ENCODE measurements at regions of chr7 and their contacts with region 1.

Region 1: GRCh38 chr7:2863461-2864066 is 19.5 kb upstream of the GNA12 start:
- DNase-seq: peak; percentile 97
- ATAC-seq: peak; percentile 95
- H3K4me3 ChIP-seq: no peak overlapping the region
- H3K27ac ChIP-seq: peak overlapping the region; percentile 97
- H3K4me1 ChIP-seq: peaks cover 13% of the 10 kb centered on the region
- H3K27me3 ChIP-seq: no peaks in the 10 kb centered on the region
- CTCF ChIP-seq: no peak
- POLR2A ChIP-seq: peak; percentile 87
- RAD21 ChIP-seq: peak; percentile 11; the same call in 1 of the 2 replicates

Region 2: DNA sequence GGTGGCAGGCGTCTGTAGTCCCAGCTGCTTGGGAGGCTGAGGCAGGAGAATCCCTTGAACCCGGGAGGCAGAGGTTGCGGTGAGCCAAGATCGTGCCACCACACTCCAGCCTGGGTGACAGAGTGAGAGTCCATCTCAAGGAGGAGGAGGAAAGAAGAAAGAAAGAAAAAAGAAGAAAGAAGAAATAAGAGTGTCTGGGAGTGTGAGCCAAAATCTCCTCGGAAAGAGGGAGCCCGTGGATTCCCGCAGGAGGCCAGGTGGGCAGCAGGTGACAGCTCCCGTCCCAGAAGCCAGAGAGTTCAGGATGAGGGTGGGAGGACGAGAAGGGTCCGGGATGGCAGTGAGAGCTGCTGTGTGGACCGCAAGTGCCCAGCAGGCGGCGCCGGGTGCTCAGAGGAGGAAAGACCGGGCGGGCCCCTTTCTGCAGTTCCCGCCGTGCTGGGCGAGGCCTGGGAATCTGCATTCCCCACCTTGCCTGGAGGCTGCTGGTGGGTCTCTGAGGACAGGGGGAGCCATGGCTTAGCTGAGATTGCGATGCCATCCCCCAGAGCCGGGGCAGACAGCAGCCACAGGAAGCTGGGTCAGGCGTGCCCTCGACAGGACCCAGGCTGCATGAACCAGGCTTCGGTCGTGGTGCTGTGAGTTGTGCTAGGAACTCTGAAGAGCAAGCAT is 192.7 kb before region 1 on chr7:
- CTCF ChIA-PET with region 1: no interaction called
- POLR2A ChIA-PET with region 1: no interaction called
- dilution Hi-C with region 1: no loop called
- in situ Hi-C with region 1: no loop called
- intact Hi-C with region 1: loop called (anchors 5 kb)
- DNase-seq: peak; percentile 51
- ATAC-seq: peak; percentile 84
- H3K4me3 ChIP-seq: no peak overlapping the region
- H3K27ac ChIP-seq: no peak overlapping the region
- H3K4me1 ChIP-seq: peaks cover 6% of the 10 kb centered on the region
- H3K27me3 ChIP-seq: no peaks in the 10 kb centered on the region
- CTCF ChIP-seq: peak; percentile 82
- POLR2A ChIP-seq: no peak; the same call in 1 of the 2 replicates
- RAD21 ChIP-seq: peak; percentile 84

Region 3: GRCh38 chr7:2956526-2957368 is 93.2 kb after region 1 on chr7:
- CTCF ChIA-PET with region 1: no interaction called
- POLR2A ChIA-PET with region 1: no interaction called
- dilution Hi-C with region 1: no loop called
- in situ Hi-C with region 1: no loop called
- intact Hi-C with region 1: no loop called
- DNase-seq: peak; percentile 67
- ATAC-seq: peak; percentile 83
- H3K4me3 ChIP-seq: no peak overlapping the region
- H3K27ac ChIP-seq: no peak overlapping the region; the same call in 1 of the 2 replicates
- H3K4me1 ChIP-seq: no peaks in the 10 kb centered on the region
- H3K27me3 ChIP-seq: no peaks in the 10 kb centered on the region; the same call in 1 of the 2 replicates
- CTCF ChIP-seq: no peak
- POLR2A ChIP-seq: no peak
- RAD21 ChIP-seq: no peak

Region 4: DNA sequence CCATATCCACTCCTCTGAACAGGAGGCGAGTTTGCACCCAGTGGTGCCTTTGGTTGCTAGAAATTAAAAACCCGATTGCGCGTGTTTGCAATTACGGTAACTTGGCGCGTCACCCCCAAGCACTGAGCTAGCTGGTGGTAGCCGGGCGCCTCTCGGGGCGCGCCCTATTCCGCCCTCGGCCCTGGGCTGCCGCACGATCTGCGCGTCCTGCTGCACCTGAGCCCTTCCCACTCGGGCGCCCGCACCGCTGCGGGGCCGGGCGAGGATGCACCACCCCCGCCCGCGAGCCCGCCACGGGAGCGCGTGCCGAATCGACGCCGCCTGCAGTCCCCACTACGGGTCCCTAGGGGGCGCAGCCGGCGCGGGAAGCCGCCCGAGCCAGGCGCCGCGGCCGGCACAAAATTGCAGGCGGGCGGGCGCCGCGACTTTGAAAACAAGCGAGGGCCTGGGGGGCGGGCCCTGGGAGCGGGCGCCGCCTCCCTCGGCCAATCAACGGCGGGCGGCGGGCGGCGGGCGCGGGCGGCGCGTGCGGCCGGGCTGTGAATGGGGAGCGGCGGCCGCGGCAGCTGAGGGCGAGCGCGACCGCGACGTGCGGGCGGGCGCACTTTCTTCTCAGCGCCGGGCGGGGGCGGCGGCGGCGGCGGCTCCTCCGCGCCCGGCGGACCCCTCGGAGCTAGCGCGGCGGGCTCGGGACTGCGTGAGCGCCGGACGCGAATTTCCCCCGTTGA is 437.3 kb after region 1 on chr7 and contains the start of gene SDK1:
- CTCF ChIA-PET with region 1: no interaction called
- POLR2A ChIA-PET with region 1: no interaction called
- dilution Hi-C with region 1: no loop called
- in situ Hi-C with region 1: no loop called
- intact Hi-C with region 1: loop called (anchors 2 kb)
- DNase-seq: peak; percentile 85
- ATAC-seq: peak; percentile 95
- H3K4me3 ChIP-seq: peak within 1 kb of the TSS; percentile 44
- H3K27ac ChIP-seq: no peak within 1 kb of the TSS
- H3K4me1 ChIP-seq: no peaks in the 10 kb centered on the region; the same call in 1 of the 2 replicates
- H3K27me3 ChIP-seq: peaks cover 14% of the 10 kb centered on the region
- CTCF ChIP-seq: peak; percentile 88
- POLR2A ChIP-seq: no peak
- RAD21 ChIP-seq: peak; percentile 81
- total RNA-seq, gene SDK1: 1.1 and 1.6 TPM in 2 replicates

Region 5: GRCh38 chr7:3897438-3898385 is 1034.1 kb after region 1 on chr7:
- CTCF ChIA-PET with region 1: no interaction called
- POLR2A ChIA-PET with region 1: no interaction called
- dilution Hi-C with region 1: no loop called
- in situ Hi-C with region 1: no loop called
- intact Hi-C with region 1: loop called (anchors 2 kb)
- DNase-seq: peak; percentile 62
- ATAC-seq: peak; percentile 85
- H3K4me3 ChIP-seq: no peak overlapping the region
- H3K27ac ChIP-seq: no peak overlapping the region
- H3K4me1 ChIP-seq: no peaks in the 10 kb centered on the region; the same call in 1 of the 2 replicates
- H3K27me3 ChIP-seq: no peaks in the 10 kb centered on the region
- CTCF ChIP-seq: peak; percentile 65
- POLR2A ChIP-seq: no peak
- RAD21 ChIP-seq: peak; percentile 63

Region 6: GRCh38 chr7:4641667-4642467 is 1778.3 kb after region 1 on chr7:
- CTCF ChIA-PET with region 1: no interaction called
- POLR2A ChIA-PET with region 1: no interaction called
- dilution Hi-C with region 1: no loop called
- in situ Hi-C with region 1: loop called (anchors 25 kb)
- intact Hi-C with region 1: no loop called
- DNase-seq: peak; percentile 89
- ATAC-seq: peak; percentile 95
- H3K4me3 ChIP-seq: peak overlapping the region; percentile 74
- H3K27ac ChIP-seq: peak overlapping the region; percentile 97
- H3K4me1 ChIP-seq: 0 out of 2 replicates have a peak, but pooled peaks cover 2% of the 10 kb centered on the region
- H3K27me3 ChIP-seq: no peaks in the 10 kb centered on the region
- CTCF ChIP-seq: peak; percentile 72
- POLR2A ChIP-seq: peak; percentile 72; the same call in 1 of the 2 replicates
- RAD21 ChIP-seq: peak; percentile 44